Colonic mucosa (tissue), 4 donors: ENCODE measurements at regions of chr4 and their contacts with region 1.

Region 1: GRCh38 chr4:20544645-20545044 is 155.6 kb upstream of the PACRGL start:
- DNase-seq: no peak
- H3K4me3 ChIP-seq: no peak overlapping the region
- H3K27ac ChIP-seq: no peak overlapping the region
- H3K4me1 ChIP-seq: no peaks in the 10 kb centered on the region
- H3K27me3 ChIP-seq: no peaks in the 10 kb centered on the region
- CTCF ChIP-seq: peak; percentile 48

Region 2: GRCh38 chr4:20422398-20422797 is 122.2 kb before region 1 on chr4:
- intact Hi-C with region 1: loop called (anchors 2 kb)
- DNase-seq: peak; percentile 56
- H3K4me3 ChIP-seq: no peak overlapping the region
- H3K27ac ChIP-seq: no peak overlapping the region
- H3K4me1 ChIP-seq: no peaks in the 10 kb centered on the region
- H3K27me3 ChIP-seq: no peaks in the 10 kb centered on the region
- CTCF ChIP-seq: peak; percentile 47

Region 3: DNA sequence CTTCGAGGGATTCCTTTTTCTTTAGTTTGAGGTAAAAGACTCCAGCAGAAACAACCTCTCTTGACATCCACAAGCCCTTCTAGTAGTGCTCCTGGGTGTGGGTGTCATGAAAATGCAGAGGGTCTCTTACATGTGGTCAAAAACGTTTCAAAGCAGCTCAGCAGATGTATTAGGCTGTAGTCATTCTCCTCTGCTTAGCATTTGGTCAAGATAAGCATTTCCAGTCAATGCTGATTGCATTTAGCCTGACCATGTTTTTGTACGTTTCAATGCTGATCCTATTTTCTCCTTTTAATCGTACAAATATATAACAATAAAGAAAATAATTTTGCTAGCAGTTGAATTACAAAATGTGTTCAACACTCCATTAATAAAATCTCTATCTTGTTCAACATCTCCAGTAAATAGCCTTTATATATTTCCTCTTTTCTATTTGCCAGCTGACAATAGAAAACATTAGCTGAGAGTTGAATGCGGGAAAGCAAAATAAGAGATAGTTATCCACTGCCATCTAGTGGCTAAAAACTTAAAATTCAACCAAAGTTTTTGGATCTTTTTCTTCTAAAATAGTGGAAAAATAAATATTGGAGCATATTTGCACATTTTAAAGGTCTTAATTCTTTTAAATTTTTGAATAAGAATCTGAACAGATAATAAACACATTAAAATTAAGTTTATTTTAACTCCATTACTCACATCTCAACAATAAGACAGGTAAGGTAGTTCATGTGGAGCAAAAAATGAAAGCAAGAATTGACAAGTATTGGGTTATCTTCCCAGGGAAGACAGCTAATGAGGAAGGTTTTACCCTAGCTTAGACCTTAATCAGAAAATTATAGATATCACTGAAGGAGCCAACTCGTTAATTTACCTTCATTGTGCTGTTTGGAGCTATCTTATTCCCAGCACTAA is 140.5 kb after region 1 on chr4:
- intact Hi-C with region 1: loop called (anchors 5 kb)
- DNase-seq: no peak
- H3K4me3 ChIP-seq: no peak overlapping the region
- H3K27ac ChIP-seq: no peak overlapping the region
- H3K4me1 ChIP-seq: no peaks in the 10 kb centered on the region
- H3K27me3 ChIP-seq: no peaks in the 10 kb centered on the region
- CTCF ChIP-seq: peak; percentile 66

Region 4: DNA sequence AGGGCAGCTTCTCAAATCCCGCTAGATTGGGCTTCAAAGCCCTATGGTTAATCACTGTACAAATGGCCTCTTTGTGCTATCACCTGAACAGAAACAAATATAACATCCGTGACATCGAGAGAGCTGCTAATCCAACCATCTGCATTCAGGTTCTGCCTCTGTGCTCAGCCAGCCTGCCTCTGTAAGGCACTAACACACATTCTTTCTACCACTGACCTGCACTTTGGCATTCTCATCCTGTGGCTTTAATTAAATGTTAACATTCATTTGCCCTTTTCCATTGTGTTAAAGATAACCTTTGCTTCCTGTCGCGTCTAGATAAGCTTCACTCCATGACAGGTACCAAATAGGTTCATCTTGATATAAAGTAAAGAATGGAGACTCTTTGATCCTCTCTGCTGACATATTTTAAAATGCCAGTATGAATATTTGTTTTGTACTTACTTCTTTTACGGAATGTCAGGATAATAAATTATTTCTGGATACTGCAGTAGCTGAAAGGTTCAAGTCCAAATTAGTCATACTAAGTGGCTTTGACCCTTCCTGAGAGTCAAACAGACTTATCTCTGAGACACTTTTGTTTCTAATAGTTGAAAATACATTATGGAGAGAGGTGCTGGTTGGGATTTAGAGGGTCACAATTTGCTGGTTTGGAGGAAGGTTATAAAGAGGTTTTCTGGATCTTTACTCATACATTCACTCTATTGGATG is 661.3 kb after region 1 on chr4:
- intact Hi-C with region 1: no loop called
- DNase-seq: no peak
- H3K4me3 ChIP-seq: no peak overlapping the region
- H3K27ac ChIP-seq: no peak overlapping the region
- H3K4me1 ChIP-seq: no peaks in the 10 kb centered on the region
- H3K27me3 ChIP-seq: no peaks in the 10 kb centered on the region
- CTCF ChIP-seq: no peak